ENCODE measurements at regions of chr18 and their contacts with region 1.

Region 1: DNA sequence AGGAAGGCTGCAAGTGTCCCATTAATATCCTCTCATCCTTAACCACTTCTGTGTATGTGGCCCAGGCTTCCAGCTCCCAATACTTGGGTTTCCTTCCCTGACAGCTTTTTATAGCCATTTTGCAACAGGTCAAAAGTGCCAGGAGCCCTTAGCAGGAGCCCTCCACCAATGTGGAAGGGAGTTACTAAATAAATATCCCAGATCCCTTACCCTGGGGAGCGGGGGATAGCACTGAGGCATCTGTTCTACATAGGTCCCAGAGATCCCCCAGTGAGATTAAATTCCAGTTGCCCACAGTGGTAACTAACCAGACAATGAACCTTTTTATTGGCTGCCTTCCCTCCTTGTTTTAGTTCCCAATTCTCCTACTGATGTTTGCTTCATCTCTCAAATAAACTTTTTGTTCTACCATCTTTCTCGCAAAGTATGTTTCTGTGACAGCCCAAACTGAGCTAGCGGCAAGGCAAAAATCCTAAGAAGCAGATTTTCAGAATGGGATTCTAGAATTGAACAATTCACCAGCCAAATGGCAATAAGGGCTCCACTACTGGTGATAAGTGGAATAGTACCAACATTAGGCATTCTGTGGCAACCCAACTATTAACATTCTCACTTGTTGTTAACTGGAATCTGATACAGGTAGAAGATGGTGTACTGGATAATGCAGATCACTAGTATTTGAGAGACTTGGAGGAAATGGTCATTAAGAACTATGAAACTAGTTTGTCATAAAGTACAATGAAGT is 83.9 kb upstream of the MAPRE2 start:
- DNase-seq: no peak

Region 2: GRCh38 chr18:34787931-34788532 is 169.3 kb before region 1 on chr18:
- intact Hi-C with region 1: no loop called
- DNase-seq: no peak

Region 3: GRCh38 chr18:34844732-34845459 is 112.4 kb before region 1 on chr18:
- intact Hi-C with region 1: no loop called
- DNase-seq: no peak

Region 4: GRCh38 chr18:34880882-34881834 is 76.1 kb before region 1 on chr18:
- intact Hi-C with region 1: loop called in 1 of 2 experiments (anchors 10 kb)
- DNase-seq: no peak

Region 5: GRCh38 chr18:34928088-34928753 is 29.1 kb before region 1 on chr18:
- intact Hi-C with region 1: no loop called
- DNase-seq: no peak